ENCODE measurements at regions of chr6 and their contacts with region 1.

Region 1: GRCh38 chr6:155248008-155249001 is 15.5 kb upstream of the CLDN20 start:
- DNase-seq: peak; percentile 62
- H3K4me3 ChIP-seq: no peak overlapping the region
- H3K27ac ChIP-seq: peak overlapping the region; percentile 77
- H3K27me3 ChIP-seq: no peaks in the 10 kb centered on the region
- CTCF ChIP-seq: peak; percentile 87

Region 2: DNA sequence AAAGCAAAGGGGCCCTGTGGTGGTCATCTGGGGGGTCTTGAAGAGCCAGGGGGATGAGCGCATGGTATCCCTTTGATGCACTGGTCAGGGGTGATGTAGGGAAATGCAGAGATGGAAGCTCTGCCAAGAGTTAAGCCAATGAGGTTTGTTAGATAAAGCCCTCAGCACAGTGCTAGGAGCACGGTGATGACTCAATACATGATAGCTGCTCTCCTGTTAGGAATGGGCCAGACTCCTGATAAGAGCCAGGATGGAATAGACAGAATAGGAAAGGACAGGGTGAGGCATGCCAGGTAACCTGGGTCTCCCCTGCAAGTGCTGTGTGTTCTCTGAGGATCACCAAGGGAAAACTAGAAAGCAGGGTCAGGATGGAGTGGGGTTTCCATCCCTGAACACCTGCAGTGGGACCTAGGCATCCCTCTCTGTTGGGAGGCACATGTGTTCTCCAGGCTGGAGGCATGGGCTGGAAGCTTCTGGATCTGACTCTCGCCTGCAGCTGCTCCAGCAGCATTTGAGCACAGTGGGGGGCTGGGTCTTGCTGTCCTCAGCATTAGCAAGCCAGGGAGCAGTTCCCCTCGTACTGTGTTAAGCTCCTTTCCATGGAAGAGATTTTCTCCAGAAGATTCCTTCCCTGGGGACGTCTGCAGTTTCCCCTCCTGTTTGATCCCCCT is 325.0 kb before region 1 on chr6:
- CTCF ChIA-PET with region 1: interaction called, 26 read pairs
- POLR2A ChIA-PET with region 1: no interaction called
- DNase-seq: no peak
- H3K4me3 ChIP-seq: no peak overlapping the region
- H3K27ac ChIP-seq: no peak overlapping the region
- H3K27me3 ChIP-seq: no peaks in the 10 kb centered on the region
- CTCF ChIP-seq: no peak

Region 3: DNA sequence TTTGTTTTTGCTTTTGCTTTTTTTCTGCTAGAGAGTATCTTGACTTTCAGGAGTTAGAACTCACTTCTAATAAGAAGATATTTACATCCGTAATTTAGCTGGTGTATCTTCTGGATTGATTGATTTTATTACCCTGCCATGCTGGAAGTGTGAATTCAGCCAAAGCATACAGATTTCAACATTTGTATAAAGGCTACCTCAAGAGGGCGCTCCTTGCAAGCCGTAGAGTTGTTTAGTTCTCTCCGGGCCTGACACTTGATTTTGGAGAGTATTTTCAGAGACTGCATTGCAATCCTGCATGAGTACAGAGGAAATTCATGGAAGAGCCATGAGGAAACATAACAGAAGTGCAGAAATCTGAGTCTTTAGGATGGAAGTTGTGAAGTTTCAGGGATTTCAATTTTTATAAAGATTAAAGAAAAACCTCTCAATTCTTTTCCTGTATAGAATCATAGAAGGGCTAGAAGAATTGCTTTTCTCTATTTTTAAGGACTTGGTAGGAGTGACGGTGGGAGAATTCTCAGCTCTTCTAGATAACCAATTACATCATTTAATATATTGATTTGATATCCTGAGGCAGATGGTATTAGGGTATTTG is 319.9 kb before region 1 on chr6:
- CTCF ChIA-PET with region 1: interaction called, 26 read pairs
- POLR2A ChIA-PET with region 1: no interaction called
- DNase-seq: peak; percentile 50
- H3K4me3 ChIP-seq: no peak overlapping the region
- H3K27ac ChIP-seq: no peak overlapping the region
- H3K27me3 ChIP-seq: no peaks in the 10 kb centered on the region
- CTCF ChIP-seq: peak; percentile 88

Region 4: DNA sequence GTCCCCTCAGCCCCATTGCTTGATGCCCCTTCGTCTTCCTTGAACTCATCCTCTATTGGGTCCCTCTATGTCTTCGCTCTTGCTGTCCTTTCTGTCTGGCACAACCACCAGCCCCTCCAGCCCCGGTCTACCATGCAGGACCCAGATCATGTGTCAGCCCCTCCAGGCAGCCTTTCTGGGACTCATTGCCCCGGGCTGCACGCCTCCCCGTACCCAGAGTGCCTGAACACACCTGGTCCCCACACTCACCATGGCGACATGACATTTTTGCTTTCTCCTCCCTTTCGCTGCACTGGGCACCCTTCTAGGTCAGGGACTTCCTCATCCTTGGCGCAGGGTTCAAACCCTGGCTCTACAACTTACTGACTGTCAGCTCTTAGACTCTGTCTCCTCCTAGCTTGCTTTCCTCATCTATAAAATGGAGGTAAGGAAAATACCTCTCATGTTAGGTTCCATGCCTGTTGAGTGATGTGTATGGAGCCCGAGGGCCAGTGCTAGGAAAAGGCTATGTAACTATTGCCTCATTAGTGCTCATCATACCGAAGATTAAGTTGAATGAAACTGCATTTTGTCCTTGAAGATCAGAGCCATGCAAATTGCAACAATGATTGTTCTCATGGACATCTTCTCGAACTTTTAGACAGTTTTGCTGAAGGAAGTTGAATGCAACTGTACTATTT is 303.0 kb before region 1 on chr6:
- CTCF ChIA-PET with region 1: no interaction called
- POLR2A ChIA-PET with region 1: no interaction called
- DNase-seq: no peak
- H3K4me3 ChIP-seq: no peak overlapping the region
- H3K27ac ChIP-seq: no peak overlapping the region
- H3K27me3 ChIP-seq: no peaks in the 10 kb centered on the region
- CTCF ChIP-seq: no peak

Region 5: DNA sequence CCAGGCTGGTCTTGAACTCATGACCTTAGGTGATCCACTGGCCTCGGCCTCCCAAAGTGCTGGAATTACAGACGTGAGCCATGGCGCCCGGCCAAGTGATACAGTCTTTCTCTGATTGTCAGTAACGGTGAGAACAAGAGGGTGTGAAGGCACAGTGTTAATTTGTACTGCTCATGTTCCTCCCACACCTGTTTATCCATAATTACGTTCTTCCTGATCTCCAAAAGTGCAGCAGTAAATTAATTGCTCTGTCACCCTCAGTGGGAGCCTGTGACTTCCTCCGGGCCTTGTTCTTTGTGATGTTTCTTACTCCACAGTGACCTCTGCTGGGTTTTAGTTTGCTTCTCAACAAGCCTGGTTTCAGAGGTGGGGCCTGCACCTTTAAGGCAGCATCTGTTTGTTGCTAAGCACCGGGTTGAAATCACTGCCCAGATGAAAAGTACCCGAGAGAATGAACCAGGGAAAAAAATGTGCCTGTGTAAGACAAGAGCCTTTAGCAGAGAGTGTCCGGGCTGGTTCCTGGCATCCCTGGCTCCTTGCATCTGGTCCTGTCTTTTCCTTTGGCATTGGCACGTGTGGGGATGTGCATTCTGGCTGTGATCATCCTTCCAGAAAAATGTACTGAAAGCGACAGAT is 73.6 kb before region 1 on chr6:
- CTCF ChIA-PET with region 1: interaction called, 89 read pairs
- POLR2A ChIA-PET with region 1: interaction called, 7 read pairs
- DNase-seq: peak; percentile 55
- H3K4me3 ChIP-seq: no peak overlapping the region
- H3K27ac ChIP-seq: no peak overlapping the region
- H3K27me3 ChIP-seq: no peaks in the 10 kb centered on the region
- CTCF ChIP-seq: peak; percentile 81

Region 6: DNA sequence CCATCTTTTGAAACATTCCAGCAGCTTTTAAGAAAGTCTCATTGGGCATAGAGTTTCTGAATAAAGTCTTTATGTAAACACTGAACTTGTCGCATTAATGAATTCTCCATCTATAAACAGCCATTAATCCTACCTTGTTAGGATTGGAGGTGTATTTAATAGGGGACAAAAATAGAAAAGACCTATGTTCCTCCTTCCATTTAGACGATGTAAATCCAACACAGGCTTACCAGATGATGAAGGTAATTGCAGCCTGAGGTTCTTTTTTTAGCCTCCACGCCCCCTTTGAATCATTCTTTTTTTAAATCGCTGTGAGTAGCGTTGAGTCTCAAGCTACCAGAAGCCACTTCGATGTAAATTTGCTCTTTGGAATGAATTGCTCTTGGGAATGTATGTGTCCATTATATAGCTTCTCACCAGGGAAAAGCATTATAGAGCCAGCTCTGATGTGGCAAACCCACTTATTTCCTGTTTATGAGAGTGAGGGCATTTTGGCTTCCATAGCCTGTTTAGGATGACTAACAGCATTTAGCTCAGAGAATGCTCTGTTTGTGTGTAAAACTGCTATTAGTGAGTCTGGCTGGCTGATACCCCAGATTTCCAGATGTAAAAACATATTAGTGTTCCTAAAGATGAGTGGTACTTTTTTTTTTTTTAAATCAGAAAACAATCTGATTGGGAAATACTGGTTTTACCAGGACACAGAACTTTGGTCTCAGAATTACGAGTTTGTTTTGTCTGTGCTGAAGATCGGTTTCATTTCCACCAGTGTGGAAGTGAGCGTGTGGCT is 59.4 kb before region 1 on chr6:
- CTCF ChIA-PET with region 1: interaction called, 23 read pairs
- POLR2A ChIA-PET with region 1: interaction called, 15 read pairs
- DNase-seq: peak; percentile 96
- H3K4me3 ChIP-seq: no peak overlapping the region; the same call in 1 of the 2 replicates
- H3K27ac ChIP-seq: peak overlapping the region; percentile 77
- H3K27me3 ChIP-seq: no peaks in the 10 kb centered on the region
- CTCF ChIP-seq: no peak

Measured in AG04450 (cell line).